Mammary epithelial cell (primary cell): ENCODE measurements at regions of chr17 and their contacts with region 1.

Region 1: GRCh38 chr17:43986225-43986981 is 18.0 kb upstream of the NAGS start:
- DNase-seq: no peak
- H3K4me3 ChIP-seq: no peak overlapping the region
- H3K27ac ChIP-seq: no peak overlapping the region
- H3K4me1 ChIP-seq: peaks cover 5% of the 10 kb centered on the region
- H3K27me3 ChIP-seq: peaks cover 13% of the 10 kb centered on the region
- CTCF ChIP-seq: no peak

Region 2: DNA sequence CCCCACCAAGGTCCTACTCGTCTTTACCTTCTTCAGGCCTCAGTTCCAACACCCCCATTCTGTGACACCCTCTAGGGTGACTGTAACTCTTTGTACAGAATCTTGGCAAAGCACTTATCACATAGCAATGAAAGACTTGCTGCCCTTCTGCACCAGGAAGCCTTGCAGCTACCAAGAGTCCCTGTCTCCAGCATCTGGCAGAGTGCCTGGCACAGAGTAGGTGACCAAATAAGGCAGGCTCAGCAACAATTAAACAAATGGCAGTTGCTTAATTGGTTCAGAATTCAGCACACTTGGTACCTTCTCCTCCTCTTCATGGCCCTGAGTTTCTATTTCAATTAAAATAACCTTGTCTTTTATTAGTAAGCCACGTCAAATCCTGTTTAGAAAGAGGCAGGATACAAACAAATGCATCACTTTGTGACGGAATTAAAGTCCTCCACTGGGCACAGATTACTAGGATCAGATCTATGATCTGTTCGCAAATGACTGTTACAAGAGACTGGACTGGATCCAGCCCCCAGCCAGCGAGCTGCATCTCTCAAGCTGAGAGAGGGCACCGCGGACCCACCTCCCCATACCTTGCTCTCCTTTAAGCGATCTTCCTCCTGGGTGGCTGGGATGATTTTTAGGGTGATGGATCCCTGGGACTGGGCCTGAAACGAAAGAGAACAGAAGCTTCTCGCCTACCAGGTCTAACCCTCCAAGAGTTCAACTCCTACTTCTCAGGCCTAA is 162.9 kb before region 1 on chr17:
- CTCF ChIA-PET with region 1: no interaction called
- dilution Hi-C with region 1: loop called (anchors 5 kb)
- in situ Hi-C with region 1: no loop called
- intact Hi-C with region 1: no loop called
- DNase-seq: no peak
- H3K4me3 ChIP-seq: no peak overlapping the region
- H3K27ac ChIP-seq: no peak overlapping the region
- H3K4me1 ChIP-seq: no peaks in the 10 kb centered on the region
- H3K27me3 ChIP-seq: no peaks in the 10 kb centered on the region
- CTCF ChIP-seq: no peak

Region 3: DNA sequence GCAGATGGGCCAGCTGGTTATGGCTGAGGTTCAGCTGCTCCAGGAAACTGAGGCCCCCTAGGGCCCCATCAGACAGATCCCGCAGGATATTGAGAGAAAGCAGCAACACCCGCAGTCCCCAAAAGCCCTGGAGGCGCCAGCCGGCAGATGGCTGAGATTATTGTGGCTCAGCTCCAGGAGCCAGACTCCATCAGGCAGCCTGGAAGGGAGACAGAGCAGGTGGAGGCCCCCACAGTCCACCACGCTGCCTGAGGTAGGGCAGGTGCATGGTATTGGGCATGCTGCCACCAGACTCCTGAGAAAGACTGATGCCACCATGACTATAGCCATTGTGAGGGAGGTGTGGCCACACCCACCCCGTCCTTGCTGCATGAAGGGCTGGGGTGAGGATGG is 37.9 kb after region 1 on chr17:
- CTCF ChIA-PET with region 1: no interaction called
- dilution Hi-C with region 1: loop called (anchors 5 kb)
- in situ Hi-C with region 1: no loop called
- intact Hi-C with region 1: no loop called
- DNase-seq: no peak
- H3K4me3 ChIP-seq: no peak overlapping the region
- H3K27ac ChIP-seq: no peak overlapping the region
- H3K4me1 ChIP-seq: no peaks in the 10 kb centered on the region
- H3K27me3 ChIP-seq: no peaks in the 10 kb centered on the region
- CTCF ChIP-seq: no peak